Astrocyte of the spinal cord (primary cell): ENCODE measurements at regions of chr9 and their contacts with region 1.

Region 1: DNA sequence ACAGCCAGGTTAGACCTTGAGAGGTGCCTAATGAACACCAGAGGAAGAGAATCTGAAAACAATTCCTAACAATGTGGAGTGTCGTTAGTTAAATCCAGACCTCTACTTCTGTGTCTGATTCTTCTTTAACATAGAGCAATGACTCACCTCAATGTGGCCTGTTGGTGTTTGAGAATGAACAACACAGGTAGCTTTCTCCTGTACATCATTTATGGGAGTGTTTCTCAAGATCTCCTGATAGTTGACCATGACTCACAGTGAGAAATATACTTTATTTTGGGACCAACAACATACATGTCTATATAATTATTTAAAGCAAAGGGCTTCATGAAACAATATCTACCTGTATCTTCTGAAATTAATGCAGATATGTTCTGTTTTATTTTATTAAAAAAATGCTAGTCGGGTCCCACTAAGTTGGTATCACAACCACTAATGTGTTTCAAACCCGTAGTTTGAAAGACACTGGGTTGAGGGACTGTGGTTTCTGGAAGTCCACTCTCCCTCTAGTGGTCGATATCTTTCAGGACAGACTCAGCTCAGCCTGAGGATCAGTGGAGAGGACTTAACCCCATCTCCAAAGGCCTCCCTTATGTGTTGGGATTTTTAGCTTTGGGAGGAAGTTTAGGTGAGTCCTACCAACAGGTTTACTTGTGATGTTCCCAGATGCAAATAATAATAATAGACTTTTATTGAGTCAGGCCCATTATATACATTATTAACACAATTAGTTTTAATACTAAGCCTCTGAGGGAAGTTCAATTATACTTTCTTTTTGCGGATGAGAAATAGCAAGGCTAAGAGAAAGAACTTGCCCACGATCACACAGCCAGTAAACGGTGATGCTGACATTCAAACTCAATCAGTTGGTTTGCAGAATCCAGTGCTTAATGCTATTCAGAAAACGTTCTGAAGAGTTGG is 70.0 kb upstream of the KLF9 start:
- DNase-seq: peak; percentile 85
- H3K4me3 ChIP-seq: no peak overlapping the region
- CTCF ChIP-seq: peak; percentile 84

Region 2: DNA sequence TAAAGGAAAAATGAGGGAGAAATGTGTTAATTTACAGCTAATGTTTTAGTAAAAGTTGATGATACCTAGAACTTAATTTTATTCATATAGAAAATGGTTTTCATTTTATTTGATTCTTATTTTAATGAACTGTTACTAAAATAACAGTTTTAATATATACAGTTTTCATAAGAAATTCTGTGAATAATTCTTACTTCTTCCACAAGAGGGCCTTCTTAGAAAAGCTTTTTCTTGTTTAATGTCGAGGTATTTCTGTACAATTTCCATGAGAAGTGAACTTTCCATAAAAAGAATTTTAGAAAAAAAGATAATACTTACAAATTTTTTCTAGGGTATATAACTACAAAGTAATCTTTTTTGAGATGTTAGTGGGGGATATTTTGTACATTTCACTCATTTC is 143.9 kb before region 1 on chr9:
- in situ Hi-C with region 1: loop called (anchors 25 kb)
- DNase-seq: peak; percentile 55
- H3K4me3 ChIP-seq: no peak overlapping the region
- CTCF ChIP-seq: peak; percentile 25